Dorsolateral prefrontal cortex (tissue), 120 donors: ENCODE measurements at regions of chr5 and their contacts with region 1.

Region 1: DNA sequence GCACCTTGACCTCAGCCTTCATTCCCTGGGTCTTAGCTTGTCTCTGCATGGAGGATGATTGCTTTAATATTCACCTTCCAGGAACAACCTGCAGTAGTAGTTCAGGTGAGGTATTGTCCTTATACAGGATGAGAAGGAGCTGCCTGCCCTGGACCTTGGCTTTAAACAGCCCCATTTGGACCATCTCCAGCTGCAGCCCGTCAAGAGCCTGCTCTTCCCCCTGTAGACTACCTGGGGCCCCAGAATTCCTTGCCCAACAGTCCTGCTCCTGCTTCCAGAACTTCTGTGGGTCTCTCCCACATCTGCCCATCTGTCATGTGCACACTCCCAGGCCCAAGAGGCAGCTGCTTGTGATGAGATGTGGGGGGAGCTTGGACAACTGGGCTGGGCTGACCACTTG is 12.2 kb upstream of the OTP start:
- DNase-seq: no peak
- H3K4me3 ChIP-seq: no peak overlapping the region
- H3K27ac ChIP-seq: no peak overlapping the region
- H3K27me3 ChIP-seq: peaks cover 0 to 13% (median 5%) of the 10 kb centered on the region in 45 donors
- CTCF ChIP-seq: no peak

Region 2: DNA sequence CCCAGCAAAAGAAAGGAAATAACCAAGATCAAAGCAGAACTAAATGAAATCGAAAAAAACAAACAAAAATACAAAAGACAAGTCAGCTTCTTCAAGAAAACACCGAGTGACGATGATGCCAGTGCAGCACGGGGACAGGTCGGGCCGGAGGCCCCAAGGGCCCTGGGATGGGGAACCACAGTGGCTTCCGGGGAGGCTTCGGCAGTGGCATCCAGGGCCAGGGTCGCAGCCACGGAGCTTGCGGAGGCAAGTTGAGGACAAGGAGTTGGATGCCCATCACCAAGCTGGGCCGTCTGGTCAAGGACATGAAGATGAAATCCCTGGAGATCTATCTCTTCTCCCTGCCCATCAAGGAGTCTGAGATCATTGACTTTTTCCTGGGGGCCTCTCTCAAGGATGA is 105.4 kb before region 1 on chr5:
- intact Hi-C with region 1: no loop called
- DNase-seq: no peak
- H3K4me3 ChIP-seq: no peak overlapping the region
- H3K27ac ChIP-seq: no peak overlapping the region
- H3K27me3 ChIP-seq: no peaks in the 10 kb centered on the region
- CTCF ChIP-seq: no peak

Region 3: GRCh38 chr5:77832166-77832770 is 181.6 kb after region 1 on chr5:
- intact Hi-C with region 1: loop called in 1 of 2 experiments (anchors 5 kb)
- DNase-seq: no peak
- H3K4me3 ChIP-seq: no peak overlapping the region
- H3K27ac ChIP-seq: no peak overlapping the region
- H3K27me3 ChIP-seq: peaks cover 0 to 16% (median 0%) of the 10 kb centered on the region in 45 donors
- CTCF ChIP-seq: no peak